HCT116 (cell line): ENCODE measurements at regions of chr12 and their contacts with region 1.

Region 1: DNA sequence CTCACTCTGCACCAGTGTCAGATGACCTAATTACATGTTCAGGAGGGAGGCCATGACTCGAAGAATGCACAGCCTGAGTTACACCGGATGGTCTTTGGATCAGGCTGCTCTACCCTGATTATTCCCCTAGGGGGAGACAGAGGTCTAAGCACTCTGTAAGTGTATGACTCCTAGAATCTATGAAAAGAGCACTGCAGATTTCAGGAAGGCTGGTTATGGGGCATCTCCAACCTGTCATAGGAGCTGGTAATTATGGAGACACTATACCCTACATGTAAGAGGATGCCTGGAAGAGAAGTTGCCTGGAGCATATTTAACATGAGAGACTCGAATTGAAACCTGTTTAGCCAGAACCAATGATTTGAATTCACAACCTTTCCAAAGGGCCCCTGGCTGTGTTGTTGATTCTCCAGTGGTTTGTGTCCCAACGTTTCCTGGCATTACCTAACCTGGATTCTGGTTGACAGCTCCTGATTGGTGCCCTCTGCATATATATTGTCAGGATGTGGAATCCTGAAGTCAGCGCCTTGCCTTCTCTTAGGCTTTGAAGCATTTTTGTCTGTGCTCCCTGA is at the start of gene MUCL1:
- DNase-seq: peak; percentile 62
- ATAC-seq: peak; percentile 100
- H3K4me3 ChIP-seq: no peak within 1 kb of the TSS
- H3K27ac ChIP-seq: no peak within 1 kb of the TSS
- H3K4me1 ChIP-seq: no peaks in the 10 kb centered on the region
- H3K27me3 ChIP-seq: peaks cover 30% of the 10 kb centered on the region
- CTCF ChIP-seq: peak; percentile 77 to 92 (median 84); a peak in 5 of 6 replicates
- POLR2A ChIP-seq: no peak
- RAD21 ChIP-seq: peak; percentile 87
- total RNA-seq, gene MUCL1: not detected

Region 2: GRCh38 chr12:54723379-54724256 is 130.5 kb before region 1 on chr12:
- CTCF ChIA-PET with region 1: no interaction called
- POLR2A ChIA-PET with region 1: no interaction called
- RAD21 ChIA-PET with region 1: no interaction called
- intact Hi-C with region 1: loop called (anchors 1 kb)
- DNase-seq: peak; percentile 13
- ATAC-seq: peak; percentile 74
- H3K4me3 ChIP-seq: no peak overlapping the region
- H3K27ac ChIP-seq: no peak overlapping the region
- H3K4me1 ChIP-seq: no peaks in the 10 kb centered on the region
- H3K27me3 ChIP-seq: peaks cover 43% of the 10 kb centered on the region
- CTCF ChIP-seq: peak; percentile 7 to 66 (median 62); a peak in 4 of 6 replicates
- POLR2A ChIP-seq: no peak
- RAD21 ChIP-seq: no peak

Region 3: DNA sequence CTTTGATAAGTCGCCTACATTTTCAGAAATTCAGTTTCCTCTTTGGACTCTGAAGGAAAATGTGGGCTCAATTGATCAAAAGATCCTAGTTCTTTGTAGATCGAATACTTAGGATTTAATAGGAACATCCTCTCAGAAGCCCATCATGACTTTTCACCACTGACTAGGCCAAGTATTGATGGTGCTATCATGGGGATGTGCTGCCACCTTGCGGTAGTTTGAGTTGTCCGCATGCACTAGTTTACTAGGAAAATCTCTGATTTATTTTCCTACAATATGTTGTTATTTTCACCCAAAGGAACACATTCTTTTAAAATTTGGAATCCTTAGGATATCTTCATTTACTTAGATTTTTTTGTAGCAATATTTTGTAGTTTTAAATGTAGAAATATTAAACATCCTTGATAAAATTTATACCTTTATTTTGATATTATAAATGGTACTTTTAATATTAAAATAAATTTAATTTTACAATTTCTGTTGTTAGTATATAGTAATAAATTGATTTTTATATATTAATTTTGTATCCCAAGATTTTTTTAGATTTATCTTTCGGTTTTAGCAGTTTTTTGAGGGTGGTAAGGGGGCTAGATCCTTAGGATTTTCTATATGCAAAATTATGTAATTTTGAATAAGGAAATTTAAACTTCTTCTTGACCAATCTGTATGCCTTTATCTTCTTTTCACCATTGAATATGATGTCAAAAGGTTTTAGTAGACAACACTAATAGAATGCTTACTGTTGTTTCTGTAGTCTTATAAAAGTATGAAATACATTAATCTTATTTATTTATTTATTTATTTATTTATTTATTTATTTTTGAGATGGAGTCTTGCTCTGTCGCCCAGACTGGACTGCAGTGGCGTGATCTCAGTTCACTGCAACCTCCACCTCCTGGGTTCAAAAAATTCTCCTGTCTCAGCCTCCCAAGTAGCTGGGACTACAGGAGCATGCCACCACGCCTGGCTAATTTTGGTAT is 219.3 kb after region 1 on chr12:
- CTCF ChIA-PET with region 1: no interaction called
- POLR2A ChIA-PET with region 1: no interaction called
- RAD21 ChIA-PET with region 1: no interaction called
- intact Hi-C with region 1: loop called (anchors 5 kb)
- DNase-seq: peak; percentile 66
- ATAC-seq: 0 out of 2 replicates have a peak, but pooled peaks have one; percentile 35
- H3K4me3 ChIP-seq: no peak overlapping the region
- H3K27ac ChIP-seq: no peak overlapping the region
- H3K4me1 ChIP-seq: no peaks in the 10 kb centered on the region
- H3K27me3 ChIP-seq: peaks cover 17% of the 10 kb centered on the region
- CTCF ChIP-seq: peak; percentile 71 to 87 (median 79)
- POLR2A ChIP-seq: no peak
- RAD21 ChIP-seq: peak; percentile 84

Region 4: DNA sequence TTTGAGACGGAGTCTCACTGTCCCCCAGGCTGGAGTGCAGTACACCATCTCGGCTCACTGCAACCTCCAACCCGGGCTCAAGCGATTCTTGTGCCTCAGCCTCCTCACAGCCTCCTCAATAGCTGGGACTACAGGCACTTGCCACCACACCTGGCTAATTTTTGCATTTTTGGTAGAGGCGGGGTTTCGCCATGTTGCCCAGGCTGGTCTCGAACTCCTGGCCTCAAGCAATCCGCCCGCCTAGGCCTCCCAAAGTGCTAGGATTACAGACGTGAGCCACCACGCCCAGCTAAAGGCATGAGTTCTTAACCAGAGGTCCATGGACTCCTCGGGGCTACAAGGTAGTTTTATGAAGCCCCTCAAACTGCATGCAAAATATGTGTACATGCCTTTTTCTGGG is 961.4 kb after region 1 on chr12:
- CTCF ChIA-PET with region 1: no interaction called
- POLR2A ChIA-PET with region 1: no interaction called
- RAD21 ChIA-PET with region 1: no interaction called
- intact Hi-C with region 1: no loop called
- DNase-seq: no peak
- ATAC-seq: no peak
- H3K4me3 ChIP-seq: no peak overlapping the region
- H3K27ac ChIP-seq: no peak overlapping the region
- H3K4me1 ChIP-seq: peaks cover 14 to 21% of the 10 kb centered on the region in 2 experiments
- H3K27me3 ChIP-seq: no peaks in the 10 kb centered on the region
- CTCF ChIP-seq: no peak
- POLR2A ChIP-seq: no peak
- RAD21 ChIP-seq: no peak